Activated naive CD4-positive, alpha-beta T cell treated with anti-CD3 and anti-CD28 coated beads for 36 hours (primary cell): ENCODE measurements at regions of chr14 and their contacts with region 1.

Region 1: DNA sequence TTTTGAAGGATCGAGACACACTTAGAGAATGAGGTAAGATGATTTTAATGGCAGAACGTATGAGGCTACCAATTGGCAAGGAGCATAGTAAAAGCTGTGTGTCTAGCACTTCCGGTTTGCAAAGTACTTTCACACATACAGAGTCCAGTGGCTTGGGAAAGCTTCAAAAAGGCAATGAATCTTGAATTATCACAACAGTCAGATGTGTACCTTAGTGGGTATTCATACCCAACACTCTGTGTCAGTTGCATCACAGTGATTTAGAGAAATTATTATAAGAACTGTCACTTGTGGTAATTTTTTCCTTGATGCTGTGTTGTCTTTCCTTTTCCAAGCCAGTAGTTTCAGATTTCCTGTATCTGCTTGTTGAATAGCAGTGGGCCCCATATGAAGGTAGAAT is 424.1 kb downstream of the PCNX1 start:
- DNase-seq: no peak
- H3K4me3 Mint-ChIP-seq: no peak overlapping the region
- H3K27ac Mint-ChIP-seq: no peak overlapping the region
- H3K4me1 Mint-ChIP-seq: peaks cover 64% of the 10 kb centered on the region
- H3K27me3 Mint-ChIP-seq: no peaks in the 10 kb centered on the region

Region 2: DNA sequence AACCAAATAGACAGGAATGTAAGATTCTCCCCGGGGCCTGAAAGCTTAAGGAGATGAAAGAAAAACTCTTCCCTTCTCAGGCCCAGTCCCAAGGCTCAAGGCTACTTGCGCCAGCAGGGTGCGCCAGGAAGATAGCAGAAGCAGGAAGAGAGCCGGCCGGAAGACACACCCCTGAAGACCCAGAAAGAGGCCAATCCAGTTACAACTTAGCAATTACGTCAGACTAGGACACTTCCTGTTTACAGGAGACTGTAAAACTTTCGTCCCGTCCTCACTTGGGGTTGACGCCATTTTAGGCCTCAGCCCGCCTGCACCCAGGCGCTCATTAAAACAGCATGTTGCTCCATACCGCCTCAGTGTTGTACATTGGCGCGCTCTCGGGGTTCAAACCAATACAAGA is 981.3 kb before region 1 on chr14:
- CTCF ChIA-PET with region 1: no interaction called
- intact Hi-C with region 1: no loop called
- DNase-seq: no peak
- H3K4me3 Mint-ChIP-seq: no peak overlapping the region
- H3K27ac Mint-ChIP-seq: no peak overlapping the region
- H3K4me1 Mint-ChIP-seq: peaks cover 5% of the 10 kb centered on the region
- H3K27me3 Mint-ChIP-seq: no peaks in the 10 kb centered on the region

Region 3: GRCh38 chr14:71290960-71291466 is 40.4 kb before region 1 on chr14:
- CTCF ChIA-PET with region 1: no interaction called
- intact Hi-C with region 1: loop called (anchors 2 kb)
- DNase-seq: peak; percentile 67
- H3K4me3 Mint-ChIP-seq: no peak overlapping the region
- H3K27ac Mint-ChIP-seq: no peak overlapping the region
- H3K4me1 Mint-ChIP-seq: peaks cover 16% of the 10 kb centered on the region
- H3K27me3 Mint-ChIP-seq: no peaks in the 10 kb centered on the region

Region 4: DNA sequence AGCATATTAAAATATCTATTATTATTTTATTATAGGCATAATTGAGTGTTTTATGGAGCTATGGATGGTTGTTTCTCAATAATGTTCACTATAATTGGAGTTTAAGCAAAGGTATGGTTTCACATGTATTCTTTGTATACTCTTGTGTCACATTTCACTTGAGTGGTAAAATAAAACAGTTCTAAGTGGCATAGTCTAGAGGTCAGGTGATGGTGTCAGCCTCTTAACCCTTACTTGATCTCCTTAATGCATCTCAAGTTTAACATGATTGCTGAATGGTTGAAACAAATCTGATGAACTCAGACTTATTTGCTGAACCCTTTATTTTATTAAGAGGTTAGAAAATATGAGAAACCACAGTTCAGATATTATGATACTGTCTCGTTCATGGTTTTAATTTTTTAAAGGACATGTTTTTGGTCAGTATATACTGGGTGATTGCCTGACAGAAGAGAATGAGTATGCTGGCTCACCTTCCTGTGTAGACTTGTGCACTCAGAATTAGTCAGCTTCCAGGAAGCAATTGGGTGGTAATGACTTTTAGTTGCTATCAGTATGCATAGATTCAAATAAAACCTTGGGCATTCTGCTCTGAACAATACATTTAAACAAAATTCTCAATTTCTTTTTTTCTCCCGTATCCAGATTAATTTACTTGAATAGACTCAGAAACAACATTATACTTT is 40.5 kb after region 1 on chr14:
- CTCF ChIA-PET with region 1: no interaction called
- intact Hi-C with region 1: loop called (anchors 5 kb)
- DNase-seq: peak; percentile 43
- H3K4me3 Mint-ChIP-seq: no peak overlapping the region
- H3K27ac Mint-ChIP-seq: no peak overlapping the region
- H3K4me1 Mint-ChIP-seq: peaks cover 21% of the 10 kb centered on the region
- H3K27me3 Mint-ChIP-seq: no peaks in the 10 kb centered on the region